Mammary epithelial cell (primary cell): ENCODE measurements at regions of chr2 and their contacts with region 1.

Region 1: GRCh38 chr2:162720559-162721271 is 117.9 kb downstream of the KCNH7 start:
- DNase-seq: no peak
- H3K4me3 ChIP-seq: no peak overlapping the region
- H3K27ac ChIP-seq: no peak overlapping the region
- H3K4me1 ChIP-seq: no peaks in the 10 kb centered on the region
- H3K27me3 ChIP-seq: no peaks in the 10 kb centered on the region
- CTCF ChIP-seq: no peak

Region 2: GRCh38 chr2:161486111-161486510 is 1234.6 kb before region 1 on chr2:
- CTCF ChIA-PET with region 1: no interaction called
- dilution Hi-C with region 1: no loop called
- in situ Hi-C with region 1: no loop called
- intact Hi-C with region 1: no loop called
- DNase-seq: no peak
- H3K4me3 ChIP-seq: no peak overlapping the region
- H3K27ac ChIP-seq: no peak overlapping the region
- H3K4me1 ChIP-seq: no peaks in the 10 kb centered on the region
- H3K27me3 ChIP-seq: no peaks in the 10 kb centered on the region
- CTCF ChIP-seq: no peak

Region 3: DNA sequence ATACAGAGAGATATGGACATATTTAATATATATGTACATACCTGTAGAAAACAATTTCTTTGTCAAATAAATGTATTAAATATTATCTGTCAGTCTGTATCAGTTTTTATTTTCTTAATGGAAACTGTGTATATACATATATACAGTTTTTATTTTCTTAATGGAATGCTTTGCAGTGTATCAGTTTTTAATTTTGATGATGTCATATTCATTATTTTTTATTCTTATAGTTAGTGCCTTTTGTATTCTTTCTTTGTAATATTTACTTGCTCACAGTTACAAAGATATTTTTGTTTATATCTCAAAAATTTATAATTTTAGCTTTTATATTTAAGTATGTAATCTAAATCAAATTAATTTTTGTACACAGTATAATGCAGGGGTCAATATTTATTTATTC is 97.2 kb after region 1 on chr2:
- CTCF ChIA-PET with region 1: interaction called, 14 read pairs
- dilution Hi-C with region 1: no loop called
- in situ Hi-C with region 1: no loop called
- intact Hi-C with region 1: no loop called
- DNase-seq: no peak
- H3K4me3 ChIP-seq: no peak overlapping the region
- H3K27ac ChIP-seq: no peak overlapping the region
- H3K4me1 ChIP-seq: no peaks in the 10 kb centered on the region
- H3K27me3 ChIP-seq: peaks cover 2% of the 10 kb centered on the region
- CTCF ChIP-seq: no peak